Endothelial cell of umbilical vein (primary cell): ENCODE measurements at regions of chr19 and their contacts with region 1.

Region 1: DNA sequence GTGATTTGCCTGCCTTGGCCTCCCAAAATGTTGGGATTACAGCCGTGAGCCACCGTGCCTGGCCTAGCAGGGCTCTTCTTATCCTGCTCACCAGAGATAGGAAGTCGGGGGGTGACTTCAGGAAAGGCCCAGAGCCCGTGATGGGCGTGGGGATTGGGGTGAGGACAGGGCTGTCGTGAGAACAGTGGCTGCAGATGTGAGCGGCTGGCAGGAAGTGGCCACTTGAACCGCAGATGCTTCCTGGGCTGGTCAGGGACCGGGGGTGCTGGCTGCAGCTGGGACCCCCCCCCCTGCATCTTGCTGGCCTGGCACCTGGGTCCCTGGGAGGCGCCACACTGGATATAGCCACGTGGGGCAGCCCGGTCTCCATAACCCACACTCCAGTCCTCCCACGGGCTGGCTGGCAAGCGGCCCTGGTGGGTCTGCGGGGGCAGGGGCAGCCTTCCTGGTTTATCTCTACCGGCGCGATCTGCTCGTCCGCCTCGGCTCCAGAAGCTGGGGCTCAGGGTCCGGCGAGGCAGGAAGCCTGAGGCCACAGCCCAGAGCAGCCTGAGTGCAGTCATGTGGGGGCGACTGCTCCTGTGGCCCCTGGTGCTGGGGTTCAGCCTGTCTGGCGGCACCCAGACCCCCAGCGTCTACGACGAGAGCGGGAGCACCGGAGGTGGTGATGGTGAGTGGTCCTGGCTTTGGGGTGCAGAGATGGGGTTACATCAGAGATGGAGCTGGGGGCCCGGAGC is at the start of gene F2RL3:
- DNase-seq: peak; percentile 73
- H3K4me3 ChIP-seq: no peak within 1 kb of the TSS
- H3K27ac ChIP-seq: peak within 1 kb of the TSS; percentile 40
- H3K4me1 ChIP-seq: peaks cover 14% of the 10 kb centered on the region
- H3K27me3 ChIP-seq: no peaks in the 10 kb centered on the region
- CTCF ChIP-seq: no peak
- POLR2A ChIP-seq: no peak
- total RNA-seq, gene F2RL3: 1.2 TPM in 2 replicates

Region 2: GRCh38 chr19:16851031-16851712 is 37.6 kb before region 1 on chr19:
- CTCF ChIA-PET with region 1: no interaction called
- POLR2A ChIA-PET with region 1: interaction called, 5 read pairs
- dilution Hi-C with region 1: no loop called
- intact Hi-C with region 1: loop called (anchors 5 kb)
- DNase-seq: no peak
- H3K4me3 ChIP-seq: no peak overlapping the region
- H3K27ac ChIP-seq: no peak overlapping the region
- H3K4me1 ChIP-seq: peaks cover 9% of the 10 kb centered on the region
- H3K27me3 ChIP-seq: no peaks in the 10 kb centered on the region
- CTCF ChIP-seq: no peak
- POLR2A ChIP-seq: no peak

Region 3: DNA sequence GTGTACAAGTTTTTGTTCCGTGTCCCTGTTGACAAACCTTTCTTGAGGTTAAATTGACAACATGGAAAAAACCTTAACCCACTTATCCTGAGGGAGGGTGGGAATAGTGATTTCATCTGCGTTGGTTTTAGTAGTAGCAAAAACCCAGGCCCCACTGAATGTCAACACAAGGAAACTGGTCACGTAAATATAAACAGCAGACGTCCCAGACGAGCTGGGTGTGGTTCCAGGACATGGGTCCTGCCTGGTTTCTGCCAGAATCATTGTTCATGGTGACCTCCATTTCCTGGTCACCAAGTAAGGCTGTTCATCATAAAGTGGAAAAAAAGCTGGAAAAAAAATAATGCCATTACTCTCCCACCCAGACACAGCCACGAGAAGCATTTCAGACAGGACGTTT is 16.9 kb before region 1 on chr19:
- CTCF ChIA-PET with region 1: no interaction called
- POLR2A ChIA-PET with region 1: no interaction called
- dilution Hi-C with region 1: no loop called
- intact Hi-C with region 1: loop called (anchors 1 kb)
- DNase-seq: peak; percentile 94
- H3K4me3 ChIP-seq: no peak overlapping the region
- H3K27ac ChIP-seq: peak overlapping the region; percentile 64
- H3K4me1 ChIP-seq: peaks cover 21% of the 10 kb centered on the region
- H3K27me3 ChIP-seq: no peaks in the 10 kb centered on the region
- CTCF ChIP-seq: no peak
- POLR2A ChIP-seq: no peak

Region 4: GRCh38 chr19:16876904-16877361 is 11.9 kb before region 1 on chr19:
- CTCF ChIA-PET with region 1: no interaction called
- POLR2A ChIA-PET with region 1: no interaction called
- dilution Hi-C with region 1: no loop called
- intact Hi-C with region 1: loop called (anchors 1 kb)
- DNase-seq: peak; percentile 13
- H3K4me3 ChIP-seq: no peak overlapping the region
- H3K27ac ChIP-seq: peak overlapping the region; percentile 16
- H3K4me1 ChIP-seq: peaks cover 19% of the 10 kb centered on the region
- H3K27me3 ChIP-seq: no peaks in the 10 kb centered on the region
- CTCF ChIP-seq: no peak
- POLR2A ChIP-seq: no peak